ENCODE measurements at regions of chr10 and their contacts with region 1.

Region 1: DNA sequence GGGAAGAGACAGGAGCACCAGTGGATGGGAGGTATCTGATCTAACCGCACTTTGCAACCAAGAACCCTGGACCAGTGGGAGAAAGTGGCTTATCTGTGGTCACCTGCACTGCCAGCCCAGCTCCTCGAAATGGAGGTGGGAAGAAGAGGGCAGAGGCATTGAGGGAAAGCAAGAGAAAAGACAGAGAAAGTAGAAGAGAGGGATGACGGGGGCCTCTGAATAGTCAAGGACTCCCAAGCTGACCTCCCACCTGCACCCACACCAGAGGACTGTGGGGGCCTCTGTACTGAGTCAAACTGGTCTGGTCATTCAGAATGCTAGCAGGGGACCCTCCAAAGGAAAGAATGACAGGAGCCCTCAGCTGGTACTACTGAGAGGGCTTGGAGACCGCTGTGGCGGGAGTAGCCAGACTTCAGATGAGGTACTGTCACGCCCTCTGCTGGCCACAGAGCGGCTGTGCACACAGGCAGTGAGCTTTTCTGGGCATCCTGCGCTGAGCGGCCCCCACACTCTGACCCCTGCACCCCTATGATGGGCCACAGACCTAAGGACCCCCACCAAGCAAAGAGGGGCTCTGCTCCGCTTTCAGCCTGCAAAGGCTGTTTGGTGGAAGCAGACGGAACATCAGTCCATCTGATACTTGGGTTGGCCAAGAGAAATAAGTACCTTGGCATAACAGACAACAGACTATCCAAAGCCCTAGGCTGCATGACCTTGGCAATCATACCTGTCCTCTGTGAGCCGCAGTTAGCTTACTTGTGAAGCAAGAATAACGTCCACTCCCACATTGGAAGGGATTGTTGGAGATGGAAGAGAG is 112.9 kb downstream of the COL13A1 start:
- DNase-seq: peak; percentile 62 to 79 (median 69)
- ATAC-seq: peak; percentile 46 to 85 (median 78)
- H3K4me3 ChIP-seq: no peak overlapping the region
- H3K27ac ChIP-seq: no peak overlapping the region
- H3K4me1 ChIP-seq: peaks cover 0 to 28% (median 10%) of the 10 kb centered on the region in 12 donors
- H3K27me3 ChIP-seq: no peaks in the 10 kb centered on the region
- CTCF ChIP-seq: peak; percentile 87 to 96 (median 92)
- POLR2A ChIP-seq: no peak

Region 2: GRCh38 chr10:69639291-69640195 is 275.1 kb before region 1 on chr10:
- intact Hi-C with region 1: loop called in 9 of 10 experiments (anchors 1 to 10 kb)
- DNase-seq: peak in 4 of 5 donors; percentile 46 to 56 (median 48)
- ATAC-seq: peak in 2 of 4 donors; percentile 60 to 68
- H3K4me3 ChIP-seq: no peak overlapping the region
- H3K27ac ChIP-seq: no peak overlapping the region
- H3K4me1 ChIP-seq: no peaks in the 10 kb centered on the region
- H3K27me3 ChIP-seq: peaks cover 0 to 13% (median 4%) of the 10 kb centered on the region in 9 donors
- CTCF ChIP-seq: peak; percentile 73 to 87 (median 85)
- POLR2A ChIP-seq: no peak

Region 3: GRCh38 chr10:69696073-69696731 is 218.4 kb before region 1 on chr10:
- intact Hi-C with region 1: loop called in 8 of 10 experiments (anchors 1 to 10 kb)
- DNase-seq: no peak
- ATAC-seq: peak; percentile 37 to 75 (median 56)
- H3K4me3 ChIP-seq: no peak overlapping the region
- H3K27ac ChIP-seq: no peak overlapping the region
- H3K4me1 ChIP-seq: peaks cover 0 to 3% (median 0%) of the 10 kb centered on the region in 12 donors
- H3K27me3 ChIP-seq: peaks cover 0 to 5% (median 0%) of the 10 kb centered on the region in 9 donors
- CTCF ChIP-seq: peak; percentile 36 to 77 (median 62)
- POLR2A ChIP-seq: no peak

Region 4: GRCh38 chr10:69742928-69743602 is 171.5 kb before region 1 on chr10:
- intact Hi-C with region 1: loop called in 2 of 10 experiments (anchors 5 to 10 kb)
- DNase-seq: peak in 1 of 5 donors; percentile 63
- ATAC-seq: peak in 3 of 4 donors; percentile 12 to 64 (median 44)
- H3K4me3 ChIP-seq: no peak overlapping the region
- H3K27ac ChIP-seq: no peak overlapping the region
- H3K4me1 ChIP-seq: peaks cover 0 to 16% (median 0%) of the 10 kb centered on the region in 12 donors
- H3K27me3 ChIP-seq: peaks cover 0 to 4% (median 0%) of the 10 kb centered on the region in 9 donors
- CTCF ChIP-seq: peak in 9 of 12 donors; percentile 18 to 51 (median 35)
- POLR2A ChIP-seq: no peak

Region 5: GRCh38 chr10:69800109-69800508 is 114.5 kb before region 1 on chr10:
- intact Hi-C with region 1: loop called in 9 of 10 experiments (anchors 5 to 10 kb)
- DNase-seq: peak in 2 of 5 donors; percentile 44 to 56
- ATAC-seq: peak in 2 of 4 donors; percentile 43 to 58
- H3K4me3 ChIP-seq: no peak overlapping the region
- H3K27ac ChIP-seq: no peak overlapping the region
- H3K4me1 ChIP-seq: peaks cover 0 to 27% (median 11%) of the 10 kb centered on the region in 12 donors
- H3K27me3 ChIP-seq: peaks cover 0 to 35% (median 4%) of the 10 kb centered on the region in 9 donors
- CTCF ChIP-seq: peak; percentile 42 to 74 (median 60)
- POLR2A ChIP-seq: no peak

Region 6: GRCh38 chr10:70293169-70293813 is 378.7 kb after region 1 on chr10:
- intact Hi-C with region 1: no loop called
- DNase-seq: no peak
- ATAC-seq: no peak
- H3K4me3 ChIP-seq: no peak overlapping the region
- H3K27ac ChIP-seq: no peak overlapping the region
- H3K4me1 ChIP-seq: peaks cover 7 to 24% (median 18%) of the 10 kb centered on the region in 12 donors
- H3K27me3 ChIP-seq: no peaks in the 10 kb centered on the region
- CTCF ChIP-seq: no peak
- POLR2A ChIP-seq: no peak

Measured in heart left ventricle (tissue), 16 donors.